Dorsolateral prefrontal cortex (tissue), 120 donors: ENCODE measurements at regions of chr1 and their contacts with region 1.

Region 1: GRCh38 chr1:39901698-39902459 is at the start of gene MYCL:
- DNase-seq: peak; percentile 59 to 82 (median 78)
- H3K4me3 ChIP-seq: peak within 1 kb of the TSS; percentile 57 to 88 (median 75)
- H3K27ac ChIP-seq: peak within 1 kb of the TSS in 31 of 59 donors; percentile 0 to 78 (median 42)
- H3K27me3 ChIP-seq: no peaks in the 10 kb centered on the region
- CTCF ChIP-seq: peak in 55 of 56 donors; percentile 45 to 86 (median 70)
- total RNA-seq, gene MYCL: 0.88 to 5.6 (median 2.3) TPM

Region 2: GRCh38 chr1:39816415-39817090 is 85.3 kb before region 1 on chr1:
- intact Hi-C with region 1: loop called (anchors 2 to 5 kb)
- DNase-seq: peak in 9 of 10 donors; percentile 46 to 78 (median 64)
- H3K4me3 ChIP-seq: no peak overlapping the region
- H3K27ac ChIP-seq: no peak overlapping the region
- H3K27me3 ChIP-seq: no peaks in the 10 kb centered on the region
- CTCF ChIP-seq: peak; percentile 59 to 91 (median 84)

Region 3: DNA sequence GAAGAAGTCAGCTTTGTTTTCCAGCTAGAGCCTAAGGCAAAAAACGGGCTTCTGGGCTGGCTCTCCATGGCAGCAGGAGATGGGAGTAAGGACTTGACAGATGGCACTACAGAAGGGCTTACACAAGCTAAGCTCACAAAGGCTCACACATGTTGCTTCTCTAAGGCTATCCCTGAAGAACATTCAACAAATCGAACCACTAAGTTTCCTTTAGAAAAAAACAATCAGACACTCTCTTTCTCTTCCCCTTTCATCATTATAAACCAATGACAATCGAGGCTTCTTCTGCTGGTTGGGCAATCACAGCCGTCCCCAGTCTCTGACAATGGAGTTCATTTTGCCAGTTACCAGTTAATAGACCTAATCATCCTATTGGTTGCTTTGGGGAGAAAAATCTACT is 59.0 kb before region 1 on chr1:
- intact Hi-C with region 1: loop called in 1 of 2 experiments (anchors 5 kb)
- DNase-seq: peak in 4 of 10 donors; percentile 12 to 49 (median 45)
- H3K4me3 ChIP-seq: peak overlapping the region in 4 of 59 donors; percentile 1 to 10 (median 4)
- H3K27ac ChIP-seq: peak overlapping the region in 50 of 59 donors; percentile 4 to 83 (median 60)
- H3K27me3 ChIP-seq: no peaks in the 10 kb centered on the region
- CTCF ChIP-seq: peak in 5 of 56 donors; percentile 8 to 21 (median 16)

Region 4: GRCh38 chr1:39954816-39955546 is 53.1 kb after region 1 on chr1 and contains the start of gene MFSD2A:
- intact Hi-C with region 1: loop called in 1 of 2 experiments (anchors 5 kb)
- DNase-seq: peak; percentile 88 to 98 (median 94)
- H3K4me3 ChIP-seq: peak within 1 kb of the TSS; percentile 47 to 90 (median 72)
- H3K27ac ChIP-seq: peak within 1 kb of the TSS in 56 of 59 donors; percentile 31 to 93 (median 75)
- H3K27me3 ChIP-seq: no peaks in the 10 kb centered on the region
- CTCF ChIP-seq: peak in 7 of 56 donors; percentile 10 to 43 (median 16)
- total RNA-seq, gene MFSD2A: 6.7 to 62.3 (median 20.8) TPM